H1 (cell line): ENCODE measurements at regions of chr1 and their contacts with region 1.

Region 1: DNA sequence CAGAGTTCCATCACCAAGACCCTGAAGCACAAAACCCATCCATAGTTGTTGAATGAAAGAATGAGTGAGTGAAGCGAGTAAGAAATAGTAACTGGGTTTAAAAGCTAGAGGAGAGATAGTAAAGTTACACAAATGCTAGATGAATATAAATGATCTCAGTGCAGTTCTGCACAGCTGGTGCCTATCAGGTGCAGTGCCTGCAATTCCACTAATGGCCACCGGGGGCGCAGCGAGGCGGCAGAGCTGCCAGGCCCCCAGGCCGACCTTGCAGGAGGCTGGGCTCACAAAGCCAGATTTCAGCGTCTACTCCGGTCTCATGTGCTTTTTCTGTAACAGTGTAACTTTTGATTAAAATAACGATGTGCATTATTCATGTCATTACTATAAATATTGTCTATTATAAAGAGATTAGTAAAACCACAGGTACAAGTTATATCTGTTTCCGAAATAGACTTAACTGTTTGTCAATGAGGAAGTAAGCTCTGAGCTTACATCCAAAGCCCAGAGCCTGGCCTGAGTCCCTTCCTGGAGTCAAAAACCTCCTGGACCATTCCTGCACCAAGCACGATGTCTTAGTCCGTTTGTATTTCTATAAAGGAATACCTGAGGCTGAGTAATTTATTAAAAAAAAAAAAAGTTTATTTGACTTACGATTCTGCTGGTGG is 477.6 kb downstream of the NPHP4 start:
- DNase-seq: peak; percentile 9 to 94
- H3K4me3 ChIP-seq: no peak overlapping the region
- H3K27ac ChIP-seq: no peak overlapping the region
- H3K4me1 ChIP-seq: 0 out of 7 replicates have a peak, but pooled peaks cover 0 to 2% (median 0%) of the 10 kb centered on the region in 4 experiments
- H3K27me3 ChIP-seq: no peaks in the 10 kb centered on the region
- CTCF ChIP-seq: peak; percentile 86 to 99 (median 97)
- EP300 ChIP-seq: no peak
- POLR2A ChIP-seq: no peak
- RAD21 ChIP-seq: peak; percentile 75 to 83

Region 2: DNA sequence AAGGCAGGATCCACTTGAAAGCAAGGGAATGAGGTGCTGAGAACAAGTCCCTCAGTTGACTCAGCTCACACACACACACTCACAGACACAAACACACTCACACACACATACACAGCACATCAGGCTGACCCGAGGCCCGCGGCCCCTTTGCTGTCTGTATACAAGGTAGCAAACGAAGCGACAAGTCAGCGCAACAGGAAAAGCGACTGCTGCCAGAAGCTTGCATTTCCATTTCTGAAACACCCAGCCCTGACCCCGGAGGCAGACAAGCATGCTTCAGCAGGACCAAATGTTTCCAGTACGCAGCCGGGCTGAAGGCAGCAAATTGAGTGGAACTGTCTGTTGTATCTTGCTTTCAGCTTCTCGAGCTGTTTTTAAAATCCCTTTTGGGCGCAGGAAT is 24.0 kb before region 1 on chr1:
- CTCF ChIA-PET with region 1: interaction called, 21 read pairs
- POLR2A ChIA-PET with region 1: no interaction called
- DNase-seq: no peak
- H3K4me3 ChIP-seq: no peak overlapping the region
- H3K27ac ChIP-seq: no peak overlapping the region
- H3K4me1 ChIP-seq: no peaks in the 10 kb centered on the region
- H3K27me3 ChIP-seq: 0 out of 7 replicates have a peak, but pooled peaks cover 0 to 2% (median 0%) of the 10 kb centered on the region in 4 experiments
- CTCF ChIP-seq: no peak
- EP300 ChIP-seq: no peak
- POLR2A ChIP-seq: no peak
- RAD21 ChIP-seq: no peak

Region 3: DNA sequence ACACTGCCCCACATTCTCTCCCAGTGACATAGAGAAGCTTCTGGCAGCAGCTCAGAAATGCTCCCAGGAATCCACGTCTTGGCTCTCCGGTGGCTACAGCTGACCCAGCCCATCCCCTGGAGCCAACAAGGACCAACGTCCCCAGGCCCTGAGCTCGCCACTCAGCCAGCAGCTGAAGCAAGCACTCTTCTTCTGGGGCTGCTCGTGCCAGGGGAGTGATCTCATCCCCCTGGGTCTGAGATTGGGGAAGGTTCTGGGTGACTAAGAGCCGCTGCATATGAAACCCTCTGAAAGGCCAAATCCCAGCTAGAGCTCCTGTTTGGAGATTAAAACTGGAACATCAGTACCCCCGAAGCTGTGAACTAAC is 10.3 kb before region 1 on chr1:
- CTCF ChIA-PET with region 1: interaction called, 12 read pairs
- POLR2A ChIA-PET with region 1: no interaction called
- DNase-seq: no peak
- H3K4me3 ChIP-seq: no peak overlapping the region
- H3K27ac ChIP-seq: no peak overlapping the region
- H3K4me1 ChIP-seq: no peaks in the 10 kb centered on the region; a peak in 2 of 7 replicates
- H3K27me3 ChIP-seq: no peaks in the 10 kb centered on the region; a peak in 2 of 7 replicates
- CTCF ChIP-seq: no peak
- EP300 ChIP-seq: no peak
- POLR2A ChIP-seq: no peak
- RAD21 ChIP-seq: no peak

Region 4: GRCh38 chr1:5555853-5556252 is 41.2 kb after region 1 on chr1:
- CTCF ChIA-PET with region 1: no interaction called
- POLR2A ChIA-PET with region 1: no interaction called
- DNase-seq: no peak
- H3K4me3 ChIP-seq: no peak overlapping the region
- H3K27ac ChIP-seq: no peak overlapping the region
- H3K4me1 ChIP-seq: no peaks in the 10 kb centered on the region
- H3K27me3 ChIP-seq: no peaks in the 10 kb centered on the region
- CTCF ChIP-seq: no peak
- EP300 ChIP-seq: no peak
- POLR2A ChIP-seq: no peak
- RAD21 ChIP-seq: no peak

Region 5: GRCh38 chr1:5620990-5621389 is 106.3 kb after region 1 on chr1:
- CTCF ChIA-PET with region 1: interaction called, 36 read pairs
- POLR2A ChIA-PET with region 1: no interaction called
- DNase-seq: peak in 1 of 2 experiments; percentile 50
- H3K4me3 ChIP-seq: no peak overlapping the region
- H3K27ac ChIP-seq: no peak overlapping the region
- H3K4me1 ChIP-seq: peaks cover 0 to 3% (median 0%) of the 10 kb centered on the region in 4 experiments; a peak in 2 of 7 replicates
- H3K27me3 ChIP-seq: no peaks in the 10 kb centered on the region
- CTCF ChIP-seq: peak; percentile 70 to 87 (median 86)
- EP300 ChIP-seq: no peak
- POLR2A ChIP-seq: no peak
- RAD21 ChIP-seq: peak; percentile 78 to 83

Region 6: DNA sequence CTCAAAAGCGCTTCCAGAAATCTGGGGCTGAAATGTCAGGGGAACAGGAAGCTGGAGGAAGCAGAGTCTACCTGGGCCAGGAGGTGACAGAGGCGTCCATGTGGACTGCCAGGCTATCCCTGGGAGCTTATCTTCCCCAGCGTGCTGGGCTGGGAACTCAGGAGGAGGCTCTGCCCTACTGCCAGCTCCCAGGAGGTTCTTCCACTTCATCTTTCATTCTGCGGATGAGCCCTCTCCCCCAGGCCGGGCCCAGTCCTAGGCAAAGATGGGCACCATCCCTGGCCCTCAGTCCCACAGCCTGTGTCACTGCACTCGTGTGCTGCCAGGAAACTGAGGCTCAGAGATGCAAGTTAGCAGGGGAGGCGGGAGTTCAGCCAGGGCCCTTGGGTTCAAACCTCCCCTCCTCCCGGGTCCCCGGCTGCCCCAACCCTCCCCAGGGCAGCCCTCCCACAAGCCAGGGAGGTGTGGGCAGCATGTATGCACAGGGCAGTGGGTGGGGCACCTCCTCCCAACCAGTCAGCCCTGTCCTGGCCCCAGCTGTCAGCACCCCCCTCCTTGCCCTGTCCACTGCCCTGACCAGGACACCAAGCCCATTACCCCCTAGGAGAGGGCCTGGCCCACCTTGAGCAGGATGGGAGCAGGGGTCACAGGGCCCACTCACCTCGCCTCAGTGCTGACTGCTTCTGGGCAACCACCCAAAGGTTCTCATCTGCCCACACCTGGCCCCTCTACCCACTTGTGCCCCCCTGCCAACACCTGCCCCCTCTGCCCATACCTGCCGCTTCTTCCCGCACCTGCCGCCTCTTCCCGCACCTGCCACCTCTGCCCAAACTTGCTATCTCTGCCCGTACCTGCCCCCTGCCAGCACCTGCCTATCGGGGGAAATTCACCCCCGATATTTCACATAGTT is 251.6 kb after region 1 on chr1:
- CTCF ChIA-PET with region 1: interaction called, 12 read pairs
- POLR2A ChIA-PET with region 1: no interaction called
- DNase-seq: no peak
- H3K4me3 ChIP-seq: peak overlapping the region in 1 of 4 experiments; percentile 33; a peak in 1 of 8 replicates
- H3K27ac ChIP-seq: peak overlapping the region; percentile 51; the same call in 1 of the 2 replicates
- H3K4me1 ChIP-seq: peaks cover 8 to 25% (median 19%) of the 10 kb centered on the region in 4 experiments
- H3K27me3 ChIP-seq: peaks cover 0 to 3% (median 0%) of the 10 kb centered on the region in 4 experiments; a peak in 3 of 7 replicates
- CTCF ChIP-seq: no peak
- EP300 ChIP-seq: no peak
- POLR2A ChIP-seq: 0 out of 3 replicates have a peak, but pooled peaks of 1 of the 2 experiments have one; percentile 31
- RAD21 ChIP-seq: no peak

Region 7: GRCh38 chr1:5915587-5916571 is 401.2 kb after region 1 on chr1:
- CTCF ChIA-PET with region 1: interaction called, 11 read pairs
- POLR2A ChIA-PET with region 1: no interaction called
- DNase-seq: peak in 1 of 2 experiments; percentile 45
- H3K4me3 ChIP-seq: no peak overlapping the region
- H3K27ac ChIP-seq: no peak overlapping the region
- H3K4me1 ChIP-seq: peaks cover 0 to 7% (median 2%) of the 10 kb centered on the region in 4 experiments; a peak in 2 of 7 replicates
- H3K27me3 ChIP-seq: no peaks in the 10 kb centered on the region
- CTCF ChIP-seq: peak in 2 of 3 experiments; percentile 52 to 63; a peak in 3 of 4 replicates
- EP300 ChIP-seq: no peak
- POLR2A ChIP-seq: no peak
- RAD21 ChIP-seq: peak; percentile 65 to 74